GM12878 (cell line): ENCODE measurements at regions of chr16 and their contacts with region 1.

Region 1: DNA sequence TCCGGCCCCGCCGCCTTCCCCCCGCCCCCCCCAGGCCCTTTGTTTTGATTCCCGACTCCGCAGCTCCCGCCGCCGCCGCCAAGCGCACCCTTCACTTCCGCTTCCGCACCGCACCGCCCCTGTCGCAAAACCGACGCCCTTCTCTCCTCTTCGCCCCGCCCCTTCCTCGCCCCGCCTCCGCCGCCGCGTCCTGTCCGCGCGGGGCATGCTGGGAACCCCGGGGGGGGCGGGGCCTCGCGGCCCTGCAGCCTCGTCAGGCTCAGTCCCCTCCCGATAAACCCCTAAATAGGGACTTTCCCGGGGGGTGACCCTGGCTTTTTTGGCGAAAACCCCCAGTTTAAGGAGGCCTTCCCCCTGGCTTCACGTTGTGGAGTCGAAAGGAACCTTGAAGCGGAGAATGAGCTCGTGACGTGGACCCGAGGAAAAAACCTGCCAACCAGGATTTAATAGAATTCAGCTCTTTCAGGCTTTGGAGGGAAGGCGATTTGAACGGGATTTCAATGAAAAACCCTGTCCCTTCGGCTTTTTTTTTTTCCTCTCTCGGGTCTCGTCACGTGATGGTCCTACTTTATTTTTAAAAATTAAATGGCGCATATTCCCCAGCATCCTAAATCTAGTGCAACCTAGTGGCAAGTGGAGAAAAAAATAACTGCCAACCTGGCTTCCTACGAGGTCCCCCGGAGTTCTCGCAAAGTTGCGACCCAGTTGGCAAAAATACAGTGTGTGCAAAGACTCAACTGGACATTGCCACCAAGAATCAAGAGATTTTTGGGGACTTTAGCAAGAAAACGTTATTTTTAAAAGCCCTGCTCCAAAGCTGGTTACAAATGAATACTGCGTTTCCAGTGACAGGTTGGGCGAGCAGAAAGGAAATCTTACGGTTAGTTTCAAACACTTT is at the start of gene MARF1:
- DNase-seq: peak; percentile 77
- ATAC-seq: peak; percentile 63
- H3K4me3 ChIP-seq: peak within 1 kb of the TSS; percentile 87
- H3K27ac ChIP-seq: peak within 1 kb of the TSS; percentile 97
- H3K4me1 ChIP-seq: peaks cover 35% of the 10 kb centered on the region
- H3K27me3 ChIP-seq: no peaks in the 10 kb centered on the region
- CTCF ChIP-seq: peak; percentile 19 to 28 (median 24); a peak in 2 of 6 replicates
- EP300 ChIP-seq: no peak; a peak in 1 of 4 replicates
- POLR2A ChIP-seq: peak; percentile 64; the same call in 1 of the 2 replicates
- RAD21 ChIP-seq: 0 out of 2 replicates have a peak, but pooled peaks have one; percentile 7
- polyA plus RNA-seq, gene MARF1: 4.5 to 5.9 TPM

Region 2: DNA sequence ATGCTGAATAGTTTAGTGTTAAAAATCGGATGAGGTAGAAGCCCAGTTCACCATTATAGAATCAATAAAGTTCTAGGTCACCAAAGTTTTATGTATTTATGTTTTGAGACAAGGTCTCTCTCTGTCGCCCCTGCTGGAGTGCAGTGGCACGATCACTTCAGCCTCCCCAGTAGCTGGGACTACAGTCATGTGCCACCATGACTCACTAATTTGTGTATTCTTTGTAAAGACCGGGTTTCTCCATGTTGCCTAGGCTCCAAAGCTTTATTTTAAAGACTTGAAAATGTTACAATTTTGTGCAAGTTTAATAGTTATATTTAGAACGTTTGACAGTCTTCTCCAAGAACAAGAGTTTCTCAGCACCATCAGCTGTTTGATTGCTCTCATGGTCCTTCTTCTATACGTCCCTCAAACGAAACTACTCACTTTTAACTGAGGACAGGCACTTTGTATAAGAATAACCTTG is 38.8 kb after region 1 on chr16:
- CTCF ChIA-PET with region 1: interaction called, 17 read pairs
- POLR2A ChIA-PET with region 1: no interaction called
- RAD21 ChIA-PET with region 1: no interaction called
- SMC1A ChIA-PET with region 1: interaction called, 5 read pairs
- in situ Hi-C with region 1: no loop called
- intact Hi-C with region 1: no loop called
- DNase-seq: no peak
- ATAC-seq: peak; percentile 90
- H3K4me3 ChIP-seq: no peak overlapping the region
- H3K27ac ChIP-seq: no peak overlapping the region
- H3K4me1 ChIP-seq: no peaks in the 10 kb centered on the region
- H3K27me3 ChIP-seq: no peaks in the 10 kb centered on the region
- CTCF ChIP-seq: peak; percentile 42 to 58 (median 51)
- EP300 ChIP-seq: no peak
- POLR2A ChIP-seq: no peak
- RAD21 ChIP-seq: peak; percentile 25; the same call in 1 of the 2 replicates

Region 3: GRCh38 chr16:15694499-15694898 is 51.2 kb after region 1 on chr16:
- CTCF ChIA-PET with region 1: no interaction called
- POLR2A ChIA-PET with region 1: no interaction called
- RAD21 ChIA-PET with region 1: no interaction called
- SMC1A ChIA-PET with region 1: no interaction called
- in situ Hi-C with region 1: no loop called
- intact Hi-C with region 1: no loop called
- DNase-seq: no peak
- ATAC-seq: no peak
- H3K4me3 ChIP-seq: no peak overlapping the region
- H3K27ac ChIP-seq: no peak overlapping the region
- H3K4me1 ChIP-seq: no peaks in the 10 kb centered on the region
- H3K27me3 ChIP-seq: no peaks in the 10 kb centered on the region
- CTCF ChIP-seq: no peak
- EP300 ChIP-seq: no peak
- POLR2A ChIP-seq: no peak
- RAD21 ChIP-seq: no peak